Left cardiac atrium (tissue), 4 donors: ENCODE measurements at regions of chr1 and their contacts with region 1.

Region 1: GRCh38 chr1:8727809-8728213 is 89.6 kb downstream of the RERE start:
- DNase-seq: no peak
- ATAC-seq: peak; percentile 54 to 83

Region 2: DNA sequence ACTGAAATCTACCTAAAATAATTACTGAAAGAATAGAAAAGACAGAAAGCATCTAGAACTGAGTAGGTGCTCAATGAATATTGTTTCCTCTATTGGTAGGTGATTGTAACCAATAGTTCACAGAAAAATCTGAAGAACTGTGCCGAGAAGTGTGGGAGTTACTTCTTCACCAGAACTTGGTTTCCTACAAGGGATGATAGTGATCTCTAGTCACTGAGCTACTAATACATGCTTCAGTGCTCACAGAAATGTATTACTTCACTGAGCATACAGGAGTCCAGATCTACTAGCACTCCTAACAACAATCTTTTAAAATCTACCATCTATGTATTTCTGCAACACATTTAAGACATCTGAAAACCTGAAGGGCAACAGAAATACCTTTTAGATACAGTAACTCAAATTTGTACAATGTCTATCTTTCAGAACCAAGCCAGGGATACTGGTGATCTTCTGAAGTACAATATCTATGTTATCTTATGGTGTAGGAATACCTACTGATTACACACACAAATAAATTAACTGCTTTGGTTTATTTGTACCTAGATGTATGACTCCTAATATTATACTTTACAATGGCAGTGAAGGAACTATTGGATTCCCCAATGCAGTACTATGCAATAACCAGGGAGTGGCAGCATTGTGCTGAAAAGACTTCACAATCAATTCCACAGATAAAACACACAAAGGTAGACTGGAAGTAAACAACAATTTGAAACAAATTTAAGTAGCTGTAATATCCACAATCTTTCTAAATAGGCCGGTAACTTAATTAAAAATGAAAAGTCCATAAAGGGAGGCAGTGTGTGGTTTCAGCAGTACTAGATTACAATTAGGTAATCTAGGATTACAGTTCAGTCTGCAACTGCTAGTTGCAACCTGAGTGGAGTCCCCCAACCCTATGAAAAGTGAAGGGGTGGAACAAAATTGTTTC is 166.9 kb before region 1 on chr1:
- intact Hi-C with region 1: loop called in 1 of 2 experiments (anchors 5 kb)
- DNase-seq: no peak
- ATAC-seq: peak; percentile 56

Region 3: DNA sequence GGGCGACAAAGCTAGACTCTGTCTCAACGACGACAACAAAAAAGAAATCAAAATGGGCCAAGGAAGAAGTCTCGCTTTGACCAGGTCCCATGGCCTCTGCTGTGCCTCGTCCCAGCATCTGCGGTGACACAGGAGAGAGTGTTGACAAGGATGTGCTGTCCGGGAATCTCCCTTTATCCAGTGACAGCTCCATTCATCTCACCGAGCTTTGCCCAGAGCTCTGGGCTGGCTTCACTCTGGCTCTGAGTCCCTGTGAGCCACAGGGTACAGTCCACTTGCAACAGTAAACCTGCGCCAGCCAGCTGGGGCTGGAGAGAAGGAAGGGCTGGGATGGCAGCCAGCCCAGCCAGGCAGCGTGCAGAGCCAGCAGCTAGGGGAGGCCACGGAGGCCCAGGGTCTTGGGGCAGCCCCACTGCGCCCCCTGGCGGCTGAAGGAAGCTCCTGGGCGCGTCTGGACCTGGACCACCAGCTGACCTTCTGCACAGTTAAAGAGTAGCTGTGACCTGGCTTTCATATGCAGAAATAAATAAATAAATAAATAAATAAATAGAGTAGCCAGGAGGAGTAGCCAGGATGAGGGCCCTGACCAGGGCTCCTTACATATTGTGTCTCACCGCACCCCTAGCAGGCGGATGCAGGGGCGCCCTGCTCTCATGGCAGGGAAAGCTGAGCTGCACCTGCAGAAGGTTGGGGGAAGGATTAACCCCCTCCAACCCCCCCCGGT is 121.0 kb after region 1 on chr1:
- intact Hi-C with region 1: loop called in 1 of 2 experiments (anchors 10 kb)
- DNase-seq: peak; percentile 94
- ATAC-seq: peak; percentile 97 to 98